Lower lobe of right lung (tissue), 2 donors: ENCODE measurements at regions of chr14 and their contacts with region 1.

Region 1: DNA sequence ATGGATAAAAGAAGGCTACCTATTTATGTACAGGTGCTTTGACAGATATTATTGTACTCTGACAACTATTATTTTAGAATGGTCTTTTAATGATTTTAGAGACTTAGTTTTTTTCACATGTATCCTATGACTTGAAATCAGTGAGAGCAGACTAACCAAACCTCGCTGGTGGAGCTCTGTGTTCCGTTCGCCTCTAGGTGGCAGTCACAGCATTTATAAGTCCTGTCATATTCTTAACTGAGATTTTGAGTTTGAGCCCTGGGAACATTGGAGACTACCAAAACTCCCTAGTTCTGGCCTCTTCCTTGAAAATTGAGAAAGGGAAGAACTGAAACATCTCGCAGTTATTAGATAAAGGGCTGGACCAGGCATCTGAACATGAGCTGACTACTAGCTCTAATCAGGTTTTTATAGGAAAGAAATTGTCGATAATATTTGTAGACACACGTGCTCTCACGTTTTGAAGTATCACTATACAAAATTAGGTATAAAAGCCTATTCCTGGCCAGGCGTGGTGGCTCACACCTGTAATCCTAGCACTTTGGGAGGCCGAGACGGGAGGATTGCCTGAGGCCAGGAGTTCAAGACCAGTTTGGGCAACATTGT is 48.3 kb downstream of the TTLL5 start:
- DNase-seq: peak; percentile 73
- ATAC-seq: peak; percentile 64 to 73
- H3K4me3 ChIP-seq: no peak overlapping the region
- H3K27ac ChIP-seq: no peak overlapping the region
- H3K4me1 ChIP-seq: no peaks in the 10 kb centered on the region
- H3K27me3 ChIP-seq: no peaks in the 10 kb centered on the region
- CTCF ChIP-seq: peak; percentile 85

Region 2: GRCh38 chr14:75982266-75983018 is 273.1 kb after region 1 on chr14:
- intact Hi-C with region 1: loop called (anchors 5 kb)
- DNase-seq: peak; percentile 86
- ATAC-seq: peak; percentile 87 to 88
- H3K4me3 ChIP-seq: peak overlapping the region; percentile 75
- H3K27ac ChIP-seq: peak overlapping the region; percentile 94
- H3K4me1 ChIP-seq: peaks cover 64% of the 10 kb centered on the region
- H3K27me3 ChIP-seq: no peaks in the 10 kb centered on the region
- CTCF ChIP-seq: peak; percentile 64